ENCODE measurements at regions of chr5 and their contacts with region 1.

Region 1: GRCh38 chr5:134648425-134649162 is at the start of gene SEC24A:
- DNase-seq: peak; percentile 87
- ATAC-seq: peak; percentile 76
- H3K4me3 ChIP-seq: peak within 1 kb of the TSS; percentile 97
- H3K27ac ChIP-seq: peak within 1 kb of the TSS; percentile 90
- H3K4me1 ChIP-seq: no peaks in the 10 kb centered on the region
- H3K27me3 ChIP-seq: no peaks in the 10 kb centered on the region
- CTCF ChIP-seq: no peak
- POLR2A ChIP-seq: peak; percentile 86
- RAD21 ChIP-seq: no peak
- total RNA-seq, gene SEC24A: 28.1 and 31.7 TPM in 2 replicates

Region 2: GRCh38 chr5:134637161-134637582 is 11.4 kb before region 1 on chr5:
- CTCF ChIA-PET with region 1: no interaction called
- POLR2A ChIA-PET with region 1: interaction called, 6 read pairs
- dilution Hi-C with region 1: no loop called
- in situ Hi-C with region 1: no loop called
- intact Hi-C with region 1: loop called (anchors 1 kb)
- DNase-seq: no peak
- ATAC-seq: no peak
- H3K4me3 ChIP-seq: no peak overlapping the region
- H3K27ac ChIP-seq: no peak overlapping the region
- H3K4me1 ChIP-seq: no peaks in the 10 kb centered on the region
- H3K27me3 ChIP-seq: no peaks in the 10 kb centered on the region
- CTCF ChIP-seq: no peak
- POLR2A ChIP-seq: no peak
- RAD21 ChIP-seq: no peak

Region 3: GRCh38 chr5:134758176-134758503 is 109.5 kb after region 1 on chr5:
- CTCF ChIA-PET with region 1: no interaction called
- POLR2A ChIA-PET with region 1: no interaction called
- dilution Hi-C with region 1: no loop called
- in situ Hi-C with region 1: no loop called
- intact Hi-C with region 1: no loop called
- DNase-seq: no peak
- ATAC-seq: peak; percentile 56
- H3K4me3 ChIP-seq: peak overlapping the region; percentile 96
- H3K27ac ChIP-seq: peak overlapping the region; percentile 6; the same call in 1 of the 2 replicates
- H3K4me1 ChIP-seq: no peaks in the 10 kb centered on the region
- H3K27me3 ChIP-seq: no peaks in the 10 kb centered on the region
- CTCF ChIP-seq: no peak
- POLR2A ChIP-seq: no peak
- RAD21 ChIP-seq: no peak

Measured in IMR-90 (cell line).